ENCODE measurements at regions of chr11 and their contacts with region 1.

Region 1: DNA sequence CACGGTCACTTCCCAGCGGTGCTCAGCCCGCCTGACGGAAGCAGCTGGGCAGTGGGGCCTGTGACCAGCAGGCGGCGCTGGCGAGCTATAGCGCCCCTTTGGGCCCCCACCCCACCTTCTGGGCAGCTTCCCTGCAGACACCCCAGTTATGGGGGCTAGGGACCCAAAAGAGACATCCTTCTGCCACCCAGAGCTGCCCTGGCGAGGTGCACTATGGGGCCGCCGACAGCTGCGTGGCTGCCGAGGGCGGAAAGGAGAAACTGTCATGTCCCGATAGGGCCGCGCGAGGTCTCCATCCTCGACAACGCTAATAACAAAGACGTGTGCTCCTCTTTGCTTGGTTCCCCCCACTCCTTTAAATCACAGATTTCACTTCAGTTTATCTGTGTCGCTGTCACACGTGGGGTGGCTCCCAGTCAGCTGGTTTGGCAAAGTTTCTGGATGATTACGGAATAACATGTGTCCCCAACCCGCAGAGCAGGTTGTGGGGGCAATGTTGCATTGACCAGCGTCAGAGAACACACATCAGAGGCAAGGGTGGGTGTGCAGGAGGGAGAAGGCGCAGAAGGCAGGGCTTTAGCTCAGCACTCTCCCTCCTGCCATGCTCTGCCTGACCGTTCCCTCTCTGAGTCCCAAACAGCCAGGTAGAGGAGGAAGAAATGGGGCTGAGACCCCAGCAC is 674 bp upstream of the MYO7A start:
- DNase-seq: peak; percentile 57
- ATAC-seq: peak; percentile 76
- H3K4me3 Mint-ChIP-seq: peak overlapping the region; percentile 57
- H3K27ac Mint-ChIP-seq: no peak overlapping the region
- H3K4me1 Mint-ChIP-seq: peaks cover 19% of the 10 kb centered on the region
- H3K27me3 Mint-ChIP-seq: peaks cover 6% of the 10 kb centered on the region
- CTCF ChIP-seq: peak; percentile 24

Region 2: GRCh38 chr11:77062924-77063323 is 64.4 kb before region 1 on chr11:
- CTCF ChIA-PET with region 1: no interaction called
- POLR2A ChIA-PET with region 1: no interaction called
- intact Hi-C with region 1: no loop called
- DNase-seq: no peak
- ATAC-seq: no peak
- H3K4me3 Mint-ChIP-seq: no peak overlapping the region
- H3K27ac Mint-ChIP-seq: no peak overlapping the region
- H3K4me1 Mint-ChIP-seq: peaks cover 10% of the 10 kb centered on the region
- H3K27me3 Mint-ChIP-seq: no peaks in the 10 kb centered on the region
- CTCF ChIP-seq: no peak

Region 3: GRCh38 chr11:77144196-77144856 is 17.0 kb after region 1 on chr11:
- CTCF ChIA-PET with region 1: no interaction called
- POLR2A ChIA-PET with region 1: no interaction called
- intact Hi-C with region 1: no loop called
- DNase-seq: no peak
- ATAC-seq: no peak
- H3K4me3 Mint-ChIP-seq: no peak overlapping the region
- H3K27ac Mint-ChIP-seq: no peak overlapping the region
- H3K4me1 Mint-ChIP-seq: peaks cover 12% of the 10 kb centered on the region
- H3K27me3 Mint-ChIP-seq: peaks cover 2% of the 10 kb centered on the region
- CTCF ChIP-seq: no peak

Region 4: GRCh38 chr11:77187776-77188632 is 60.6 kb after region 1 on chr11:
- CTCF ChIA-PET with region 1: interaction called, 28 read pairs
- POLR2A ChIA-PET with region 1: no interaction called
- intact Hi-C with region 1: loop called (anchors 1 kb)
- DNase-seq: peak; percentile 35
- ATAC-seq: peak; percentile 54
- H3K4me3 Mint-ChIP-seq: no peak overlapping the region
- H3K27ac Mint-ChIP-seq: no peak overlapping the region
- H3K4me1 Mint-ChIP-seq: no peaks in the 10 kb centered on the region
- H3K27me3 Mint-ChIP-seq: no peaks in the 10 kb centered on the region
- CTCF ChIP-seq: peak; percentile 41